ENCODE measurements at regions of chr12 and their contacts with region 1.

Region 1: DNA sequence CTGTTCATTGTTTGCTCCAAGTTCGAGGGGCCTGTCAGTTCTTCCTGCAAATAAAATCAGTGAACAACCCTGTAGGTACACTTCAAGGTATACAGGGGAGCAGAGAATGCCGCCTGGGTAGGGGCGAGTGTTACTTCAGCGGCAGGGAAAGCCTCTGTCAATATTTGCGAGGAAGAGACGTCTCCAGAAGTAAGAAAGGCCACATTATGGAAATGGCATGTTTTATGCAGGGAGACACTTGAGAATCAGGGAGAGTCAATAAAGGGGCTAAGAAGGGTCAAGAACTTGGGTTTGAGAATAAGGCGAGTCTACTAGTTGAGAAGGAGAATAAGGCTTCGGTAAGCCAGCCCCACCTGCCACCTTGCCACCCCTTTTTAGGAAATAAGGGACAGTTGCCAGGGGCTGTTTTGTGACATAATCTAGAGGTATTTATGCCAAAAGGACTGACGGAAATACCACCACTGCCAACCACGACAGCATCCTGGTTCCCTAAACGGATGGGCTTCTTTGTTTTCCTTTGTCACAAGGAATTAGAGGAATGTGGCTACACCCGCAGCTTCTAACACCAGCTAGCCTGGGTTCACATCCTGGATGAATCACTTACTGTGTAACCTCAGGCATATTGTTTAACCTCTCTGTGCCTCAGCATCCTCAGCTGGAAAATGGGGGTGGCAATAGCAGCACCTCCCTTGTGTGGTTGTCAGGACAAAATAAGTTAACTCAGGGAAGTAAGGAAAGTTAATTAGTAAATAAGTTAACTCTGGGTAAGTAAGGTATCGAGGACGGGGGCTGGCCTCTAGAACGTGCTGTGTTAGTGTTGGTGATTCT is 67.7 kb downstream of the EID3 start:
- DNase-seq: no peak
- H3K4me3 ChIP-seq: no peak overlapping the region
- H3K27me3 ChIP-seq: no peaks in the 10 kb centered on the region
- CTCF ChIP-seq: no peak

Region 2: DNA sequence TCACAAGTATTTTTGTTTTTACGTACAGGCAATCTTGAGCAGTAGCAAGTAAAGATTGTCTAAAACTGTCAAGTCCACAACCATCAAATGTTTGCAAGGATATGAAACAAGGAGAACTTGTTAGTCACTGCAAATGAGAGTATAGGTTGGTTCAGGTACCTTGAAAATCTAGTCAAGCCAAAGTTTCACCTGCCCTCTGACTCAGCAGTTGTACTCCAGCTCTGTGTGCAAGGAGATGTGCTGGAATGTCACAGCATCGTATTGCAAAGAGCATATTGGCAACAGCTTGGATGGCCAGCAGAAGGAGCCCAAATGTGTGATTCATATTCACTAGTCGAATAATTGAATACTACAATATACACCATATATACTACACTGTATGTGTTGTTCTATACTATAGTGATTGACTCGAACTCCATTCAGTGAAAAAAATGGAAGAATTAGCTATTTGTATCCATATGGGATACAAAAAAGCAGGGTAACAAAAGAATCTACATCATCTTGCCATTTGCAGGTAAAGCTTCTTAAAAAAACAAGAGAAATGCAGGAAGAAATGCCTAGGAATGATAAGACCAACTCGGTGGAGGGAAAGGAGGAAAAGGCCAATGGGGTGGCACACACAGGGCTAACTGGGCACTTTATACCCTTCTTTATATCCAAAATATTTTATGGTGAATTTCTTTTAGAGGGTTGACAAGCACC is 23.7 kb before region 1 on chr12:
- CTCF ChIA-PET with region 1: no interaction called
- POLR2A ChIA-PET with region 1: no interaction called
- DNase-seq: no peak
- H3K4me3 ChIP-seq: no peak overlapping the region
- H3K27me3 ChIP-seq: no peaks in the 10 kb centered on the region
- CTCF ChIP-seq: no peak

Region 3: DNA sequence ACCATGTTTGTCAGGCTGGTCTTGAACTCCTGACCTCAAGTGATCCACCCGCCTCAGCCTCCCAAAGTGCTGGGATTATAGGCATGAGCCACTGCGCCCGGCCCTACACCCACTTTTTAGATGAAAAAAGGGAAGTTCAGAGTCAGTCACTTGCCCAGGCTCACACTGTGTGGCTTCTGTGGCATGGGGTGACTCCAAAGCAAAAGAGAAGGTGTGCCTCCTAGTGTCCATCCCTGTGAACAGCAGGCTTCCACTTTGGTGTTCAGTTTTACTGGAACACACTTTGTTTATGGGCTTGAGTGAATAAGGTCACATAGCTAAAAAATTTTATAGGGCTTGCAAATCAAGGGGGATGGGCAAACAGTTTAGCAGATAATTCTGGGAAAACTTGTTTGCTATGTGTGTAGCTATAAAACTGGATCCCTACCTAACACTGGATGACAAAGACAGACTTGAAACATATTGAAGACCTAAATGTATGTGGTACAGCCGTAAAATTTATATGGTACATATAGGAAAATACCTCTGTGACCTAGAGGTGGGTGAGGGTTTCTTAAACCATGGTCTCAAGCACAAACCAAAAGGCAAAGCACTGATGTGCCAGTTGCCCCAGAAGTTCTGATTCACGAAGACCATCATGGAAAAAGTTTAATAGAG is 12.8 kb before region 1 on chr12:
- CTCF ChIA-PET with region 1: interaction called, 10 read pairs
- POLR2A ChIA-PET with region 1: no interaction called
- DNase-seq: no peak
- H3K4me3 ChIP-seq: no peak overlapping the region
- H3K27me3 ChIP-seq: no peaks in the 10 kb centered on the region
- CTCF ChIP-seq: peak; percentile 82